ENCODE measurements at regions of chr21 and their contacts with region 1.

Region 1: DNA sequence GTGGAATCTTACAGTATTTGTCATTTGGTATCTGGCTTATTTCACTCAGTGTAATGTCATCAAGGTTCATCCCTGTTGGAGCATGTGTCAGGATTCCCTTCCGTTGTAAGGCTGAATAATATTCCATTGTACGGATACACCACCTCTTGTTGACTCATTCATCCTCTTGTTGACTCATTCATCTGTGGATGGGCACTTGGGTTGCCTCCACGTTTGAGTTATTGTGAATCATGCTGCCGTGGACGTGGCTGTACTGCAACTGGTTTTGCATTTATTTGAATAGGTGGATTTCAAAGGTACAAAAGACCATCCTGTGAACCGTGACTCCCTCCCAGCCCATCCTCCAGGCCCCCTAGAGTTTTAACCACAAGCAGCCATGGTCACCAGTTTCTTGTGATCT is 11.9 kb upstream of the TCP10L start:
- DNase-seq: peak; percentile 69
- H3K27ac ChIP-seq: peak overlapping the region; percentile 63
- CTCF ChIP-seq: no peak

Region 2: GRCh38 chr21:32392880-32393676 is 204.1 kb before region 1 on chr21 and contains the start of gene URB1:
- CTCF ChIA-PET with region 1: interaction called, 15 read pairs
- POLR2A ChIA-PET with region 1: no interaction called
- DNase-seq: peak; percentile 86
- H3K27ac ChIP-seq: peak within 1 kb of the TSS; percentile 81
- CTCF ChIP-seq: no peak

Region 3: DNA sequence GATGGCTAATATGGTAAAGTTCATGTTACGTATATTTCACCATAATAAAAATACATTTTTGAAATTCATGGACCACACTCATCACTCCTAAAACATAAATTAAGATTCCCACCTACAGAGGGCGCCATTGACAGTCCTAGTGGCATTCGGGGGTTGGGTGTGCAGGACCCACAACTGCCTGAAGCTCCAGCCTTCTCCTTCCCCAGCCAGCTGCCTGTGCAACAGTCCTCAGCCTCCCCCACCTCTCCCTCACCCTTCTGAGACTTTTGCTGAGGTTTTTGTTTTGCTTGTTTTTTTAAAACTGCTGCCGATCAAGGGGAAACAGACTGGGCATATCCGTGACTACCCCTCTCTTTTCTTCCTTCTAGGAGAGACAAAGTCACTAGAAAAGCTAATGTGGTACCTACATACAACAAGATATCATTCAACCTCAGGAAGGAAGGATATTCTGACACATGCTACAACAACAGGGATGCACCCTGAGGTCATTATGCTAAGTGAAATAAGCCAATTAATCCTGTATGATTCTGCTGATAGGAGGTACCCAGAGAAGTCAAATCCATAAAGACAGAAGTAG is 193.9 kb before region 1 on chr21:
- CTCF ChIA-PET with region 1: interaction called, 10 read pairs
- POLR2A ChIA-PET with region 1: no interaction called
- DNase-seq: peak; percentile 51
- H3K27ac ChIP-seq: no peak overlapping the region
- CTCF ChIP-seq: peak; percentile 63

Region 4: DNA sequence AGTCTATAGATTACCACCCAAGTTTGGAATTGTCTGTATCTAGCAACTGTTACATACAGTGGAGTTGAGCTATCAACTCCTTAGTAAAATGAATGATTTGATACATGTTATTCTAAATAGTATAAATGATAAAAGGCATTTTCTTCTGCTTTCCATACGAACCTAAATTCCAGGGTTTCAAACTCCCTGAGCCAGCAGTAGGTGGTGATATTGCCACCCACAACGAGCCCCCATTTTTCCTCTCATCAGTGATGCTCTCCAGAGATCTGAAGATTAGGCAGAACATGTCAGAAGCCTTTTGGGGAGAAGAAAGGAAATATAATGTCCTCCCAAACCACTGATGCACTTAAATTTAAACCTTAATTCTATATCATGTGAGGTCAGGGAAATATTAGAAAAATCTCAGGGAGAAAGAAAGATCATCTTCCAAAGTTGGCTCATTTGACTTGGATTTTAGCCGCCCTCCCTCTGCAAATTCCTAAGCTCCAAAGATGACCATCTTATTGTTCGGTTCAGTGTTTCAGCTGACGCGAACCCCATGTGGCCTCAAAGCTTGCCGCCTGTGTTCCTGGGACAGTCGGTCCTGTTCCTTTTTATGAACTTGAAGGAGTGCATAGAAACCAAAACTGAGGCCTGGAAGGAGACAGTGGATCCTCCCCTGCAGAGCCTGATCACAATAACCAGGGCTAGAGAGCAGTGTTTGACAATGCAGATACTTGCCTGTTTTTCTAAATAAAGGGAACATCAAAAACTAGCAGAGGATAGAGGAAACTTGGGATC is 182.4 kb before region 1 on chr21:
- CTCF ChIA-PET with region 1: interaction called, 12 read pairs
- POLR2A ChIA-PET with region 1: interaction called, 3 read pairs
- DNase-seq: peak; percentile 24
- H3K27ac ChIP-seq: peak overlapping the region; percentile 54
- CTCF ChIP-seq: peak; percentile 51

Region 5: DNA sequence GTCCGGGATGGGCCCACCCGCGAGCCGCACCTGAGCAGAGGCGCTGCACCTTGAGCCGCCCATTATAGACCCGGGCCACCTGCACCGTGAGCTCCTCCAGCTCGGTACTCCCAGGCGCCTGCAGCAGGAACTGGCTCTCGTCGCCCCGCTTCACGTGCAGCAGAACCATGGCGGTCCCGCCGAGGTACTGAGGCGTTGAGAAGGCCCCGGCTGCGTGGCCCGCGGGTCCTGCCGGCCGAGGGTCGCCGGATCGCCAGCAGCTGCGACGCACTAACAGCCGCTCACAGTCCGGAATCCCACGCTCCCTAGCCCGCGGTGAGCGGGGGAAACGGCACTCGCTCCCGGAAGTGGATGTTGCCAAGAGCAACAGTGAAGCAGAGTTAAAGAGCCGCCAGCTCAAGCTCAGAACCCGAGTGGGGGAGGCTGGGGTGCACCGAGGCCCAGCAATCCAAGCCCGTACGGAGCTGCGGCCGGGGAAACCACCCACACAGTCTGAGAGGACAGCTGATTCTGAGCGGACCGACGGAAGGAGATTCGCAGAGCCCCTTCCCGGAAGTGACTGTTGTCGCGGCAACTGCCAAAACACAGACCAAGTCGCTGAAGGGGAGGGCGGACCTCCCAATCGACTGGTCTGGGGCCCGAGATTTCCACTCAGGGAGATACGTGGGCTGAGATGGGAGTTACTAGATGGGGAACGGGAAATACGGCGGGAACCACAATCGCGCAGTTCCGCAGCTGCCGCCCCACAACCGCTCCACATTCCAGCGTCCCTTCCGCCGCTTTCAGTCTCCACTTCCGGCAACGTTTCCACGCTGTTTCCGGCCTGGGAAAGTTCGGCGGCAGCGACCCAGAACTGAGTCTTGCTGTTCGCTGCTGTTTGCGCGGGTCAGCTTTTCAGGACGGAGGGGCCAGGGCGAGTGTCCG is 15.1 kb after region 1 on chr21 and contains the start of gene CFAP298:
- CTCF ChIA-PET with region 1: interaction called, 14 read pairs
- POLR2A ChIA-PET with region 1: no interaction called
- DNase-seq: peak; percentile 88
- H3K27ac ChIP-seq: peak within 1 kb of the TSS; percentile 98
- CTCF ChIP-seq: no peak